ENCODE measurements at regions of chr19 and their contacts with region 1.

Region 1: DNA sequence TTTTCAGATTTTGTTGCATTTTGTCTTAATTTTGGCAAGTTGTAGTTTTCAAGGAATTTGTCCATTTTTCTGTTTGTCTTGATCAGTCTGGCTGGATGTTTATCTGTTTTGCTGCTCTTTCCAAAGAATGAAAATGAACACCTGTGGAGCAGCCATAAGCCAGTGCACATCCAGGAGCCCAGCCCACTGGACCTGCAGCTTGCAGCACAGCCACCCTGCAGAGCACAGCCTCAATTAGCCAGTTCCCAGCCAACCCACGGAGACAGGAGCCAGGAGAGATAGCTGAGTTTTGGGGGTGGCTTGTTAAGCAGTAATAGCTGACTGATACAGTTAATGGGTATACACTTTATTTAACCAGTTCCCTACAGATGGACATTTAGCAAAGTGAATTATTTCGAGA is 38.0 kb upstream of the URI1 start:
- DNase-seq: no peak
- H3K4me3 ChIP-seq: no peak overlapping the region
- H3K27ac ChIP-seq: no peak overlapping the region
- H3K4me1 ChIP-seq: no peaks in the 10 kb centered on the region
- H3K27me3 ChIP-seq: peaks cover 21% of the 10 kb centered on the region; the same call in 1 of the 2 replicates
- CTCF ChIP-seq: no peak

Region 2: GRCh38 chr19:29887442-29887855 is 16.6 kb before region 1 on chr19:
- CTCF ChIA-PET with region 1: no interaction called
- POLR2A ChIA-PET with region 1: no interaction called
- intact Hi-C with region 1: no loop called
- DNase-seq: no peak
- H3K4me3 ChIP-seq: no peak overlapping the region
- H3K27ac ChIP-seq: no peak overlapping the region
- H3K4me1 ChIP-seq: no peaks in the 10 kb centered on the region
- H3K27me3 ChIP-seq: peaks cover 38% of the 10 kb centered on the region
- CTCF ChIP-seq: no peak

Region 3: GRCh38 chr19:30373593-30373992 is 469.6 kb after region 1 on chr19:
- CTCF ChIA-PET with region 1: interaction called, 15 read pairs
- POLR2A ChIA-PET with region 1: no interaction called
- intact Hi-C with region 1: no loop called
- DNase-seq: no peak
- H3K4me3 ChIP-seq: no peak overlapping the region
- H3K27ac ChIP-seq: no peak overlapping the region
- H3K4me1 ChIP-seq: no peaks in the 10 kb centered on the region
- H3K27me3 ChIP-seq: peaks cover 60% of the 10 kb centered on the region
- CTCF ChIP-seq: no peak